HEK293 (cell line): ENCODE measurements at regions of chr3 and their contacts with region 1.

Region 1: DNA sequence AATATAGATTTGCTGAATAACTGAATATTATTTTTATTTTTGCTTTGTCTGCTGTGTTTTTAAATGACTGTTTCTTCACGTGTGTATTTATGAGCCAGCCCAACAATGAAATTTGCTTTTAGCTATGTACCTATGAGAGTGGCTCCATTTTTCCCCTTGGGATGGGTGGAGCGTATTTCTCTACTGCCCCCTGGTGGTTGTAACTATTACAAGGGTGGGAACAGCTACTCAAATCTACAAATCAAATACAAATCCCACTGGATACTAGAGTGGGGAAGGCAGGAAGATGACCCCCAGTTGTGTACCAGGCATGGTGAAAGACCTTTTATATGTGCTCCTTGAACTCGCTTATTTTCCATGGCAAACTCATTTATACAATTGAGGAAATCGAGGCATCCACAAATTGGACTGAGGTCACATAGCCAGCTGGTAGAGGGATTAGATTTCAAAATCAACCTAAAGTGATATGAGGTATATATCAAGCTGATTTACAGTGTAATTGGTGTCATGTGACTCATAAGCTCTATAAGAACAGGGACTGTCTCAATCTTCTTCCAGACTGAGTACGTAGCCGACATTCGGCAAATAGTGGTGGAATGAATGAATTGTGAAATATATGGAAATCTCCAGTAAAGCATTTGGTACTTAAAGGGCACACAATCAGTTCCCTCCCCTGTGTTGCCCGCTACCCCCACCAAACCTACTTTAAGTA is 69.5 kb upstream of the VEPH1 start:
- H3K4me3 ChIP-seq: no peak overlapping the region
- H3K27ac ChIP-seq: no peak overlapping the region
- H3K4me1 ChIP-seq: no peaks in the 10 kb centered on the region; the same call in 1 of the 2 replicates
- CTCF ChIP-seq: no peak

Region 2: GRCh38 chr3:156978481-156978961 is 594.2 kb before region 1 on chr3:
- CTCF ChIA-PET with region 1: no interaction called
- POLR2A ChIA-PET with region 1: no interaction called
- H3K4me3 ChIP-seq: no peak overlapping the region
- H3K27ac ChIP-seq: no peak overlapping the region
- H3K4me1 ChIP-seq: no peaks in the 10 kb centered on the region
- CTCF ChIP-seq: no peak

Region 3: GRCh38 chr3:157417247-157417646 is 155.5 kb before region 1 on chr3:
- CTCF ChIA-PET with region 1: no interaction called
- POLR2A ChIA-PET with region 1: no interaction called
- H3K4me3 ChIP-seq: no peak overlapping the region
- H3K27ac ChIP-seq: no peak overlapping the region
- H3K4me1 ChIP-seq: no peaks in the 10 kb centered on the region
- CTCF ChIP-seq: no peak

Region 4: GRCh38 chr3:157527131-157527881 is 45.4 kb before region 1 on chr3:
- CTCF ChIA-PET with region 1: interaction called, 75 read pairs
- POLR2A ChIA-PET with region 1: no interaction called
- H3K4me3 ChIP-seq: no peak overlapping the region
- H3K27ac ChIP-seq: no peak overlapping the region
- H3K4me1 ChIP-seq: no peaks in the 10 kb centered on the region
- CTCF ChIP-seq: no peak

Region 5: DNA sequence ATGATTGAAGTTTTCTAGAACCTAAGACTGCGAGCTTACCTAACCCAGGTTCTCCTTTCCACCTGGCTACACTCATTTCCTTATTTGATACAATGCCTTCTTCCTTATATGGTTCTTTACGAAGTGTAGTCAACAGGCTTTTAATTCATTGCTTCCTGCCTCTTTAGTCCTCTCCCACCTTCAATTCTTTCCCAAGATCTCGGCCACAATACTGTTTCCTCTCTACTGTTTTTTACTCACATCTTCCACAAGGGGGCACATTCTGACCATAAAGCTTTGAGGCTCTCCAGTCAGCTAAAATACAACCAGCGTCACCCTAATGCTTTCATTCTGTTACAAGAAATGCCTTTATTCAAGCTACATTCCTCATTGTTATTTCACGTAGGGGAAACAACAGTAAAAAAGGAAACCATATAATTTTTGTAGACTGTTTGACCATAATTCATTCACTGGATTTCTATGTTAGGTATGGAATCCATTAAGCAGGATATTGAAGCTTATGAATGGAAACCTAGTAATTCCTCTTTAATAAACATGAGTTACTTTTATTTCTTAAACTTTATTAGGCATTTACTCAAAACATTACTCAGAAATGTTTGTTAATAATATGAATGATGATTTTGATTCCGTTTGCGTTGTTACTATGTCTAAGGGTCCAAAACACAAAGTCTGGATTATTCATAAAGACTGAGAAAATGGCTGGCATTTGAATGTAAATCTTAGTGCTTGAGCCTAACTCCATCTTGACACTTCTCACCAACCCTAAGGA is 40.0 kb before region 1 on chr3:
- CTCF ChIA-PET with region 1: interaction called, 75 read pairs
- POLR2A ChIA-PET with region 1: no interaction called
- H3K4me3 ChIP-seq: no peak overlapping the region
- H3K27ac ChIP-seq: no peak overlapping the region
- H3K4me1 ChIP-seq: no peaks in the 10 kb centered on the region
- CTCF ChIP-seq: peak; percentile 55; the same call in 1 of the 2 replicates

Region 6: GRCh38 chr3:157559401-157559800 is 13.3 kb before region 1 on chr3:
- CTCF ChIA-PET with region 1: interaction called, 12 read pairs
- POLR2A ChIA-PET with region 1: no interaction called
- H3K4me3 ChIP-seq: no peak overlapping the region
- H3K27ac ChIP-seq: no peak overlapping the region
- H3K4me1 ChIP-seq: no peaks in the 10 kb centered on the region
- CTCF ChIP-seq: no peak

Region 7: DNA sequence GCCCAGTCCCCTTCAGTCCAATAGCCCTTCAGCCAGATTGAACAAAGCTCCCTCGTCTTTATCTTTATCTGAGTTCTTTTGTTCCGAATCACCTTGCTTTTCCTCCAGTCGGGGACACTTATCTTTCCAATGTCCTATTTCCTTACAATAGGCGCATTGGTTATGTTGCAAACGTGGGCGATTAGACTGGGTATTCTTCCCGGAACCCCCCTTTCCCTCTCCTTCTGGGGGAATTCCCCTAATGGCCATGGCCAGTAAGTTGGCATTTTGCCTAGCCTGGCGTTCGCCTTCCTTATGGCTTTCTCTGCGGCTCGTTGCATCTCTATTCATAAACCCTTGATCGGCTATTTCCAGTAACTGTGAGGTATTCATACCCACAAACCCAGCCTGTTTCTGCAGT is 12.7 kb after region 1 on chr3:
- CTCF ChIA-PET with region 1: interaction called, 11 read pairs
- POLR2A ChIA-PET with region 1: no interaction called
- H3K4me3 ChIP-seq: no peak overlapping the region
- H3K27ac ChIP-seq: no peak overlapping the region
- H3K4me1 ChIP-seq: no peaks in the 10 kb centered on the region
- CTCF ChIP-seq: no peak